ENCODE measurements at regions of chrX and their contacts with region 1.

Region 1: DNA sequence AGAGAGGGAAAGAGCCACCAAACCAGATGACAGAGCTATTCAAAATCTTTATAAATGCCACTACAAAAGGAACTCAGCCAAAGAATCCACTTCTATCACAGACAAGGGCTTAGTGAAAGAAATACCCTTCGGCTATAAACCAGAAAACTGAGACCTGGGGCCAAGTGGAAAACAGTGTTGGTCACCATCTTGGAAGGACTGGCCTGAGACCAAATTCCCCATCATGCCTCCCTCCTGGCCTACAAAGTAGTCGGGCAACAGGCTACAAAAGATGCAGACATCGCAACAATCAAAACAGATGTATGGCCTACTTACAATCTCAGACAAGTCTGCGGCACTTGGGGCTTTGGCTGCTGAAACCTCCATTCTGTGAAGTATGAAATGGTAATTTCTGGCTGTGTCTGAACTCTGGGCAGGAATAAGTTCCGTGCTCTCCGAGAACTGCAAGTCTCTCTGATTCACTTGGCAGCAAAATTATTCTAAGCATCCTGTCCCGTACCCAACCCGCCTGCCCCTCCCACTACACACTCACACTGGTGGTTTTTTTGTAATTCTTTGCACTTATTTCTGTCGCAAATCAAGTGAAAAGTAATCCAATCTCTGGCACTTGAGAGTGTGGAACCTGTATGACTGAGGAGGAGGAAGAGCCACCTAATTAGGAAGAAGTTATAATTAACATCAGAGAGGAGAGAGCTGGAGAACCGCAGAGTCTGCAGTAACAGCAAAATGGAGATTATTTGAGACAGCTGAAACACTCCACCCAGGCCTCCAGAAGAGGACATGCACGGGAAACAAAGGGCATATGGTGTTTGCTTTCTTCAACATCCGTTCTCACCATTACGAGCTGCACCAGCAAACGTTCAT is 87.8 kb downstream of the SH3KBP1 start:
- DNase-seq: peak; percentile 64
- ATAC-seq: peak; percentile 73
- H3K4me3 Mint-ChIP-seq: peak overlapping the region; percentile 91
- H3K27ac Mint-ChIP-seq: peak overlapping the region; percentile 94
- H3K4me1 Mint-ChIP-seq: peaks cover 72% of the 10 kb centered on the region
- H3K27me3 Mint-ChIP-seq: no peaks in the 10 kb centered on the region

Region 2: GRCh38 chrX:19739683-19740082 is 59.9 kb before region 1 on chrX:
- CTCF ChIA-PET with region 1: interaction called, 3 read pairs
- POLR2A ChIA-PET with region 1: interaction called, 10 read pairs
- DNase-seq: peak; percentile 42
- ATAC-seq: no peak
- H3K4me3 Mint-ChIP-seq: no peak overlapping the region
- H3K27ac Mint-ChIP-seq: peak overlapping the region; percentile 64
- H3K4me1 Mint-ChIP-seq: peaks cover 62% of the 10 kb centered on the region
- H3K27me3 Mint-ChIP-seq: no peaks in the 10 kb centered on the region

Region 3: GRCh38 chrX:19747652-19748610 is 51.6 kb before region 1 on chrX:
- CTCF ChIA-PET with region 1: interaction called, 20 read pairs
- POLR2A ChIA-PET with region 1: interaction called, 17 read pairs
- DNase-seq: peak; percentile 87
- ATAC-seq: peak; percentile 81
- H3K4me3 Mint-ChIP-seq: peak overlapping the region; percentile 67
- H3K27ac Mint-ChIP-seq: peak overlapping the region; percentile 98
- H3K4me1 Mint-ChIP-seq: peaks cover 95% of the 10 kb centered on the region
- H3K27me3 Mint-ChIP-seq: no peaks in the 10 kb centered on the region

Region 4: GRCh38 chrX:19811807-19812604 is 12.5 kb after region 1 on chrX:
- CTCF ChIA-PET with region 1: interaction called, 9 read pairs
- POLR2A ChIA-PET with region 1: interaction called, 10 read pairs
- DNase-seq: no peak
- ATAC-seq: peak; percentile 56
- H3K4me3 Mint-ChIP-seq: no peak overlapping the region
- H3K27ac Mint-ChIP-seq: peak overlapping the region; percentile 71
- H3K4me1 Mint-ChIP-seq: peaks cover 75% of the 10 kb centered on the region
- H3K27me3 Mint-ChIP-seq: no peaks in the 10 kb centered on the region

Region 5: GRCh38 chrX:19840899-19841648 is 41.5 kb after region 1 on chrX:
- CTCF ChIA-PET with region 1: interaction called, 3 read pairs
- POLR2A ChIA-PET with region 1: interaction called, 12 read pairs
- DNase-seq: no peak
- ATAC-seq: peak; percentile 67
- H3K4me3 Mint-ChIP-seq: peak overlapping the region; percentile 55
- H3K27ac Mint-ChIP-seq: peak overlapping the region; percentile 87
- H3K4me1 Mint-ChIP-seq: peaks cover 71% of the 10 kb centered on the region
- H3K27me3 Mint-ChIP-seq: no peaks in the 10 kb centered on the region